Activated CD4-positive, alpha-beta memory T cell treated with anti-CD3 and anti-CD28 coated beads for 36 hours (primary cell): ENCODE measurements at regions of chr1 and their contacts with region 1.

Region 1: DNA sequence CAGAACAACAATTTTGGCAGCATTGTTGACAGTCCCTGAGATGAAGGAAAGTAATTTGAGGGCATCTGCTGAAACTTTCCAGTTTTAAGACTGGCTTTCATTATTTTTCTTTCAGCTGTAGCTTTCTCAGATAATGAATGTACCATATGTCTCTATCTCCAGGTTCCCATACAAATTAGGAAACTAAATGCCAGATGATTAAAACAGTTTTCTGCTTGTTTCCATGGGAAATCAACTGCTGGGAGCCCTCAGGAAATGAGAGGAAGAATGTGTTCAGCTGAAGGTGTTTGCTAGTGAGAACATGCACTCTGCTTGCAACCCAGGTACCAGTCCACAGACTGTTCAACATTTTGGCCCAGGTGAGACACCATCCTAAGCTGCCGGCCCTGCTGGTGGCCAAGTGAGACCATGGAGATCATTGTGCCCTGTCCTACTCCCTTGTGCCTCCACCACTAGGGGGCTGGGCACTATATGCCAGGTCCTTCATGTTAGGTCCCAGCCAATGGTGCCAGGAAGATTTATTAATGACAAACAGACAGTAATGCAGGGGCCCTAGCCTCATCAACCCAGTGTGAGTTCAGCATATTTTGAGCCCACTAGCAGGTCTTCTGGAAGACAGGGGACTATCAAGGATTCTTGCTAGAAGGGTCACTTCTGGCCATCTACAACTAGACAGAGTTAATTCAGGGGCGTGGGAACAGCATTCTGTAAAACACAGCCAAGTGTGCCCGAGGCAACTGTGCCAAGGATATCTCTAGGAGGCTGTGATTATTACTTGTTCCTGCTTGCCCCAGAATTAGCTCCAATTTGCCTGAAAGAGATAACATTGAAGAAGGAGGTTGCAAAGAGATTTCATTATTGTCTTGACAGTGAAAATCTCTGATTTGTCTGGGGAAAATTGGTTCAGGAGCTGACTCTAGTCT is 17.0 kb upstream of the LRRC8C start:
- DNase-seq: peak; percentile 33
- H3K4me3 Mint-ChIP-seq: no peak overlapping the region
- H3K27ac Mint-ChIP-seq: no peak overlapping the region
- H3K4me1 Mint-ChIP-seq: peaks cover 82% of the 10 kb centered on the region
- H3K27me3 Mint-ChIP-seq: no peaks in the 10 kb centered on the region

Region 2: GRCh38 chr1:89465201-89465600 is 150.7 kb before region 1 on chr1:
- CTCF ChIA-PET with region 1: no interaction called
- POLR2A ChIA-PET with region 1: no interaction called
- intact Hi-C with region 1: loop called (anchors 1 kb)
- DNase-seq: peak; percentile 55
- H3K4me3 Mint-ChIP-seq: no peak overlapping the region
- H3K27ac Mint-ChIP-seq: peak overlapping the region; percentile 47
- H3K4me1 Mint-ChIP-seq: peaks cover 20% of the 10 kb centered on the region
- H3K27me3 Mint-ChIP-seq: peaks cover 44% of the 10 kb centered on the region

Region 3: GRCh38 chr1:89598450-89599331 is 17.2 kb before region 1 on chr1:
- CTCF ChIA-PET with region 1: interaction called, 35 read pairs
- POLR2A ChIA-PET with region 1: interaction called, 26 read pairs
- intact Hi-C with region 1: loop called (anchors 1 kb)
- DNase-seq: no peak
- H3K4me3 Mint-ChIP-seq: no peak overlapping the region
- H3K27ac Mint-ChIP-seq: peak overlapping the region; percentile 64
- H3K4me1 Mint-ChIP-seq: peaks cover 84% of the 10 kb centered on the region
- H3K27me3 Mint-ChIP-seq: no peaks in the 10 kb centered on the region

Region 4: DNA sequence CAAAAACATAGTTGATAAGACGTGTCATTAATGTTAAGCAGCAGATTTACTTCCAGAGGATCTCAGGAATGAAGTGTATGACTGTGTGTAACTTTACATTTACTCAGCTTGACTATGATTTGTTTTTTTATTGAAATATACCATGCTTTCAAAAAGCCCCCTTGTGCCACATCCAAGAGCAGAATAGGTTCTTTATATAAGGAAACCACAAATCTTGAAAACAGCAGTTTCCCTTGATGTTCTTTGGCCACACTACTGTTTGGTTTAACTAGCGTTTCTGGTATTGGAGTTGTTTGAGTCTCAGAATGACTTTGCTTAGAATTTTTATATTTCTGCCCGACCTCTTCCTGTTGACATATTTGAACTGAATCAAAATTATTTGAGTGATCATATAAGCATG is 41.9 kb after region 1 on chr1:
- CTCF ChIA-PET with region 1: interaction called, 4 read pairs
- POLR2A ChIA-PET with region 1: no interaction called
- intact Hi-C with region 1: loop called (anchors 2 kb)
- DNase-seq: no peak
- H3K4me3 Mint-ChIP-seq: no peak overlapping the region
- H3K27ac Mint-ChIP-seq: peak overlapping the region; percentile 68
- H3K4me1 Mint-ChIP-seq: peaks cover 92% of the 10 kb centered on the region
- H3K27me3 Mint-ChIP-seq: no peaks in the 10 kb centered on the region